CD8-positive, alpha-beta T cell (primary cell): ENCODE measurements at regions of chr4 and their contacts with region 1.

Region 1: DNA sequence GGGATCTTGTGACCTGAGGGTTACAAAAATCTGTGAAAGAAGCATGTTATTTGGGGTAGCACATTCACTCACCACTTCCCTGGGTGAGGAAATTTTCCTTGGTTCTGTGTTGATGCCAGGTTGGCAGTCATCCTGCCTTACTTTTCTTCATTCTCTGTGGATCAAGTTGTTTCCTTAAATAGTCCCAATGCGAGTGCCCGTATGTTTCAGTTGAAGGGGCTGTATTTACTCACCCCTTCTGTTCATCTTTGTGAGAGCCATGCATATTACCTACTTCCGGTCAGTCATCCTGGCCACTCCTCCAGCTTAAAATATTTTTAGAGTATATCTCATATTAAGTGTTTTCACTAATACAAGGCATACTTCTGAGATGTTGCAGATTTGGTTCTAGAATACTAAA is 2.6 kb upstream of the UGT2B7 start:
- DNase-seq: no peak
- ATAC-seq: no peak
- H3K4me3 ChIP-seq: no peak overlapping the region
- H3K4me3 Mint-ChIP-seq: no peak overlapping the region
- H3K27ac ChIP-seq: no peak overlapping the region
- H3K27ac Mint-ChIP-seq: no peak overlapping the region
- H3K4me1 ChIP-seq: no peaks in the 10 kb centered on the region
- H3K4me1 Mint-ChIP-seq: no peaks in the 10 kb centered on the region
- H3K27me3 ChIP-seq: no peaks in the 10 kb centered on the region
- H3K27me3 Mint-ChIP-seq: no peaks in the 10 kb centered on the region
- CTCF ChIP-seq: no peak

Region 2: GRCh38 chr4:69133993-69134392 is 40.3 kb after region 1 on chr4:
- CTCF ChIA-PET with region 1: no interaction called
- POLR2A ChIA-PET with region 1: no interaction called
- intact Hi-C with region 1: loop called in 1 of 2 experiments (anchors 1 kb)
- DNase-seq: no peak
- ATAC-seq: no peak
- H3K4me3 ChIP-seq: no peak overlapping the region
- H3K4me3 Mint-ChIP-seq: no peak overlapping the region
- H3K27ac ChIP-seq: no peak overlapping the region
- H3K27ac Mint-ChIP-seq: no peak overlapping the region
- H3K4me1 ChIP-seq: no peaks in the 10 kb centered on the region
- H3K4me1 Mint-ChIP-seq: no peaks in the 10 kb centered on the region
- H3K27me3 ChIP-seq: no peaks in the 10 kb centered on the region
- H3K27me3 Mint-ChIP-seq: no peaks in the 10 kb centered on the region
- CTCF ChIP-seq: no peak